ENCODE measurements at regions of chr1 and their contacts with region 1.

Region 1: DNA sequence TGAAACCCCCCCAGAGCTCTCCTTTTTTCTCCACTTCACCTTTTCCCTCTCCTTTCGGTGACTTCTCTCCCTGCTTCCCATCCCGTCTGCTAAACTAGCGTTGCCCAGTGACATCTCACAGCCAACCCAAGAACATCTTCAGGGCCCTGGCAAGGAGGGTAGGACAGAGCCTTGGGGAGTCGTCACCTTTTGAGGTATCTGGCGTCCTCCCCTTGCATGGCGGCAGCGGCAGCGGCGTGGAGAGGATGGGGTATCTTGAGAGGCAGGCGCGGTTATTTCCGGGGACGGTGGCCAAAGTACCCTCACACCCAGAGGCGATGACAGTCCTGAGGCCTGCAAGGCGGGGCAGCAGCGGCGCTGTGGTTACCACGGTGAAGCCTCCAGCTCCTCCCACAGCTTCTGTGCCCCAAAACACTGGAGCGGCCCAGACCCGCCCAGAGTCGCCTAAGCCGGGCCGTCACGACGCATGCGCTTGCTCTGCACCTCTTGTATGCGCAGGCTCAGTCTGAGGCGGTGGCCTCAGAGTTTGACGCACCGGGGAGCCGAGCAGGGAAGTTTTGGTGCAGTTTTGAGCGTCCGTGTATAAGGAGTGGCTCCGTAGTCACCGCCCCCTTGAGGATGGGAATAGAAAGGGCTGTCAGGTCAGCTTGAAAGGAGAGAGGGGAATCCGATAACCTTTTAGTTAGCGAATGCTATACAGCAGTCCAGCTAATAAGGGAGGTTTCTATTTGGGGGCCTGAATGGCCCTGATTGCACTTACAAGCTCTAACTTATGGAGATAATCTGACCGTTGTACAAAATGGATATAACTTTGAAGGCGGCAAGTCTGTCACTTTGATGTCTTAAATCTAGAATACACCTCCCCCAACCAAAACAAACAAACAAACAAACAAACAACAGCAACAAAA is at the start of gene KIFAP3:
- DNase-seq: peak; percentile 98
- ATAC-seq: peak; percentile 95
- H3K4me3 ChIP-seq: peak within 1 kb of the TSS; percentile 75
- H3K27ac ChIP-seq: peak within 1 kb of the TSS; percentile 78
- H3K4me1 ChIP-seq: no peaks in the 10 kb centered on the region
- H3K27me3 ChIP-seq: no peaks in the 10 kb centered on the region
- CTCF ChIP-seq: peak; percentile 52 to 72 (median 65)
- EP300 ChIP-seq: no peak
- POLR2A ChIP-seq: peak; percentile 86
- RAD21 ChIP-seq: peak; percentile 58
- polyA plus RNA-seq, gene KIFAP3: 15.8 to 16.9 TPM

Region 2: DNA sequence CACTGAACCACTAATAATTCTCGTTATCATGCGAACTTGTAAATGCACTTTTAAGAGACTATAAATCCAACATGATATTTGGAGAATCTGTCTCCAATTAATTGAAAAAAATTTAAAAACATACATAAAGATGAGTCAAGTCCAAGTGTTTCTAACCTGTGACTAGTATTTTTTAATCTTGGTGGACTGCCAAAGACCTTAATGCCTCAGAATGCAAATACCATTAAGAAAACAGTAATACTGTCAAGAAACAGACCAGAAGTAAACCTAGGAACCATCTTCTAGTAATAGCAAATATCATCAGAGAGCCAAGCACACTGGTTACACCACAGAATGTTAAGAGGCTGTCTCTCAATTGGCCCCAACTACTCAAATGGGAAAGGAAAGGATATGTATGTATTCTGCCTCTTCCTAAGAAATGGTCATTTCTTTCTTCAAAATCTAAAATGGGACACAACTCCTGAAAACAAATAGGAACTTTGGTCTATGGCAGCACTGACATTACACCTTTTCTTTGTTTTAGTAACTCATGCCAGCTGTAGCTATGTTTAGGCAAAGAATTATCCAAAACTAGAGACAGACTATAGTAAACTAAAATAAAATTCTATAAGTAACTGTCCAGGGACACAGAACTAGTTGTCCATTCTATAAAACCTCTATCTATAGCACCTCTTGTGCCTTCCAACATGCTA is 196.6 kb before region 1 on chr1:
- CTCF ChIA-PET with region 1: no interaction called
- POLR2A ChIA-PET with region 1: no interaction called
- RAD21 ChIA-PET with region 1: no interaction called
- SMC1A ChIA-PET with region 1: no interaction called
- in situ Hi-C with region 1: no loop called
- intact Hi-C with region 1: no loop called
- DNase-seq: no peak
- ATAC-seq: no peak
- H3K4me3 ChIP-seq: no peak overlapping the region
- H3K27ac ChIP-seq: no peak overlapping the region
- H3K4me1 ChIP-seq: peaks cover 5% of the 10 kb centered on the region
- H3K27me3 ChIP-seq: no peaks in the 10 kb centered on the region
- CTCF ChIP-seq: no peak
- EP300 ChIP-seq: no peak
- POLR2A ChIP-seq: no peak
- RAD21 ChIP-seq: no peak

Region 3: DNA sequence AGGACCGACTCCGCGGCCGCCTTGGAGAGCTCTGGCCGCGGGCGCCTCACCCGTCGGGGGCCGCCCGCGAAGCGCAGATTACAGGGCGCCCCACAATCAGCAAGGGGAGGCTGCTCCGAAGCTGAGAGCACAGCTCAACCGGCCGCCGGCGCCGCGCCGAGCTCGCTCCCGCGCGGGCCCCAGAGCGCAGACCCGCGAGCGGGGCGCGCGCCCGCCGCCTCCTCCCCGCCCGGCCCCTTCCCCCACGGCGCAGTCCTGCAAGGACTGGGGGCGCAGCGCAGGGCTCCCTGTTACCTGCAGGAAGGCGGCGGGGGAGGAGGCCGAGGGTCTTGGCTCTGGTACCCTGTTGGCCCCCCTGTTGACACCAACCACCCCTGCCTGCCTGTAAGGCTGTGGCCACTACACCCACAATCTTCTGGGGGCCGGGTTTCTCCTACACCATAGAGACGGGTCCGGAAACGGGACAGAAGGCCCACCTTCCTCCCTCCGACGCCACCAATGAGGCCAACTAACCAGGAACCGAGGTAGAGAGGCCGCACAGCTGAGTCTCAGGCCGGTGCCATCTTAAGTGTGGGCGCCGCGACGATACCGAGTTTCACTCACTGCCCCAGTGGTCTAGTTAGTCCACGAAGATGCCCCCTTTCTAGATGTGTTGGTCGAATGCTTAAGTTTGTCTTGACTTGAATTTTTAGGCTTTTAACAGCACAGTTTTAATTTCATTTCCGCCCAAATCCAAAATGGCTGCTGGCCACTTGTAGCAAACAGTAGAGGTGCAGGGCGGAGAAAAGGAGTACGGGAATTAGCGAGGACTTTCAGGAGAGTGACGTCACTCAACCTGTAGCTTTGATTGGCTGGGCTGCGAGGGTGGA is 180.8 kb before region 1 on chr1 and contains the start of gene SCYL3:
- CTCF ChIA-PET with region 1: interaction called, 4 read pairs
- POLR2A ChIA-PET with region 1: interaction called, 3 read pairs
- RAD21 ChIA-PET with region 1: interaction called, 10 read pairs
- SMC1A ChIA-PET with region 1: interaction called, 12 read pairs
- in situ Hi-C with region 1: no loop called
- intact Hi-C with region 1: loop called (anchors 5 kb)
- DNase-seq: peak; percentile 98
- ATAC-seq: peak; percentile 86
- H3K4me3 ChIP-seq: peak within 1 kb of the TSS; percentile 93
- H3K27ac ChIP-seq: peak within 1 kb of the TSS; percentile 99
- H3K4me1 ChIP-seq: peaks cover 23% of the 10 kb centered on the region
- H3K27me3 ChIP-seq: no peaks in the 10 kb centered on the region
- CTCF ChIP-seq: no peak
- EP300 ChIP-seq: peak; percentile 5 to 39; a peak in 1 of 4 replicates
- POLR2A ChIP-seq: peak; percentile 93
- RAD21 ChIP-seq: no peak
- polyA plus RNA-seq, gene SCYL3: 4.3 to 5.6 TPM

Region 4: DNA sequence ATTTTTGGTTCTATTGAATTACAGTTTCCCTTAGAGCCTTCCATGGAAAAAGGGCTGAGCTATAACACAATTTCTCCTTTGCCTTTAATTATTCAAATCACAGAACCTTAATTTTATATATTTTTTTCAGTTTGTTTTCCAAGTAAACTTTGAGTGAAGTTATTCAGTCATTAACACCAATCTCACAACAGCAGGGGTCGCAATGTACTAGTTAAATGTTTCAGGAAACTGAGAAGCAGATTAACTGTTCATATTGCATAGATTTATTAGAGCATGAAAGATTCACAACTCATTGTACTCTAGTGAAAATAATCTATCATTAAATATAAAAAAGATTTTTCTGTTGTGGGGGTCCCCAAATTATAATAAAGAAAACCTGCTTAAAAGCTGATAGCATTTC is 64.1 kb before region 1 on chr1:
- CTCF ChIA-PET with region 1: interaction called, 4 read pairs
- POLR2A ChIA-PET with region 1: no interaction called
- RAD21 ChIA-PET with region 1: no interaction called
- SMC1A ChIA-PET with region 1: interaction called, 8 read pairs
- in situ Hi-C with region 1: no loop called
- intact Hi-C with region 1: loop called (anchors 5 kb)
- DNase-seq: no peak
- ATAC-seq: peak; percentile 53; the same call in 2 of the 3 replicates
- H3K4me3 ChIP-seq: no peak overlapping the region
- H3K27ac ChIP-seq: no peak overlapping the region
- H3K4me1 ChIP-seq: no peaks in the 10 kb centered on the region
- H3K27me3 ChIP-seq: no peaks in the 10 kb centered on the region
- CTCF ChIP-seq: peak; percentile 13 to 46 (median 25); a peak in 3 of 6 replicates
- EP300 ChIP-seq: no peak
- POLR2A ChIP-seq: no peak
- RAD21 ChIP-seq: peak; percentile 84

Region 5: GRCh38 chr1:170240409-170240808 is 165.9 kb after region 1 on chr1:
- CTCF ChIA-PET with region 1: interaction called, 3 read pairs
- POLR2A ChIA-PET with region 1: no interaction called
- RAD21 ChIA-PET with region 1: interaction called, 3 read pairs
- SMC1A ChIA-PET with region 1: interaction called, 3 read pairs
- in situ Hi-C with region 1: no loop called
- intact Hi-C with region 1: loop called (anchors 5 kb)
- DNase-seq: peak; percentile 32
- ATAC-seq: peak; percentile 94
- H3K4me3 ChIP-seq: no peak overlapping the region
- H3K27ac ChIP-seq: no peak overlapping the region
- H3K4me1 ChIP-seq: peaks cover 10% of the 10 kb centered on the region; the same call in 1 of the 2 replicates
- H3K27me3 ChIP-seq: no peaks in the 10 kb centered on the region
- CTCF ChIP-seq: no peak
- EP300 ChIP-seq: peak; percentile 9 to 39; a peak in 2 of 4 replicates
- POLR2A ChIP-seq: no peak
- RAD21 ChIP-seq: no peak

Region 6: DNA sequence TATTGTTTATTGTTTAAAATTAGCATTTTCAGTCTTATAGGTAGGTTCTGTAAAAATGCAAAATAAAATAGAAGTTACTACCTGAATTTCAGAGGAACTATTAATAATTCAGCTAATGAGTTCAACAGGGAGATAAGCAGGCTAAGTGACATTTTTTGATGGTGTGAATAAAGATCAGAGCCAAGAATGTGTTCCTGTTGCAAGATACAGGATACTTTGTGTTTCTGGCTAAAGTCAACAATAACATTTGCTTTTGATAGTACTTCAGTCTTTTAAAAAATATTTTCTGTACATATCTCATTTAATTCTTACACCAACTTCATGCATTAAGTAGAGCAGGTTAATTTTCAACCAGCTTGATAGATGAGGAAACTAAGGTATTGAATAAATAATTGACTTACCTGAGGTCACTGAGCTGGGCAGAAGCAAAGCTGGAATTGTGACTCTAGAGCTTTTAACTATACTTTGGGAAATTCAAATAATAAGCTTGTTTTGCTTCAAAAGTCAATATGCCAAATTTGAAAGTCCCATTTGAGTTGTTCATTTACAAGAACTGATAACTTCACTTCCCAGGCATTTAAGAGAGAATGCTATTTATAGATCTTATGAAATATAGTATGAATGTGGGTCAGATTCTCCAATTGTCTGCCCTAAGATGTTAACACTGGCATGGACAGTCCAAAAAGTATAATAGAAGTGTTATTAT is 463.4 kb after region 1 on chr1:
- CTCF ChIA-PET with region 1: interaction called, 3 read pairs
- POLR2A ChIA-PET with region 1: interaction called, 3 read pairs
- RAD21 ChIA-PET with region 1: interaction called, 7 read pairs
- SMC1A ChIA-PET with region 1: interaction called, 15 read pairs
- in situ Hi-C with region 1: loop called (anchors 10 kb)
- intact Hi-C with region 1: loop called (anchors 2 kb)
- DNase-seq: no peak
- ATAC-seq: no peak
- H3K4me3 ChIP-seq: no peak overlapping the region
- H3K27ac ChIP-seq: no peak overlapping the region
- H3K4me1 ChIP-seq: no peaks in the 10 kb centered on the region
- H3K27me3 ChIP-seq: no peaks in the 10 kb centered on the region
- CTCF ChIP-seq: no peak
- EP300 ChIP-seq: no peak
- POLR2A ChIP-seq: no peak
- RAD21 ChIP-seq: no peak

Region 7: DNA sequence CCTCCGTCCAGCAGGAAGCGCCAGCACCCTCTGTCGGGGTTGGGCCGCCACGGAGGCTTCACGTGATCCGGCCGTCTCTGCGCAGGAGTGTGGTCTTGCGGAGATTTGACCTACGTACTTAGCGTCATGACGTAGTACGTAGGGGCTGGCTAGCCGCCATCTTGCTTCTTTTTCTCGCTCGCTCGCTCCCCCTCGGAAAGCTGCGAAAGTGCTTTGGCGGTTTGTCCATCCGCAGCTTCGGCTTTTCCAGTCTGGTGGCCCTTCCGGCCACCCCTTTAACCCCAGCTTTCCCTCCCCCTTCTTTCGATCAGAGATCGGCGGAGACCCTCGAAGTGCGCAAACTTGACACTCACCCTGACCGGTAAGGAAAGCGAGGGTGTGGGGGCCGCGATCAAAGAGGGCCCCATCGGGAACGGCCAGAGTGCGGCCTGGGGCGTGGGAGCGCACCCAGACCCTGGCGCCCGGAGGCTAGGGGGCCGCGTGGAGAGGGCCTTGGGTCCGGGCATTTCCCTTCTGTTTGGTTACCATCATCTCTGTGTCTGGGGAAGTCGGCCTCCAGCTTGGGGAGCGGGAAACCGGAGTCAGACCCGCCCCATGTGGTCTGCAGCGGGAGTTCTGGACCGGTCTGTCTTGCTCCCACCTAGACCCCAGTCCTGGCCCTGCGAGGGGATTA is 1411.0 kb after region 1 on chr1 and contains the start of gene PRRC2C:
- CTCF ChIA-PET with region 1: no interaction called
- POLR2A ChIA-PET with region 1: no interaction called
- RAD21 ChIA-PET with region 1: no interaction called
- SMC1A ChIA-PET with region 1: no interaction called
- in situ Hi-C with region 1: no loop called
- intact Hi-C with region 1: loop called (anchors 10 kb)
- DNase-seq: peak; percentile 90
- ATAC-seq: peak; percentile 93
- H3K4me3 ChIP-seq: peak within 1 kb of the TSS; percentile 92
- H3K27ac ChIP-seq: peak within 1 kb of the TSS; percentile 98
- H3K4me1 ChIP-seq: no peaks in the 10 kb centered on the region; the same call in 1 of the 2 replicates
- H3K27me3 ChIP-seq: no peaks in the 10 kb centered on the region
- CTCF ChIP-seq: peak; percentile 73 to 98 (median 88)
- EP300 ChIP-seq: peak; percentile 22 to 26; a peak in 1 of 4 replicates
- POLR2A ChIP-seq: peak; percentile 82
- RAD21 ChIP-seq: peak; percentile 82
- polyA plus RNA-seq, gene PRRC2C: 53.4 to 74.2 TPM